MCF 10A (cell line): ENCODE measurements at regions of chr4 and their contacts with region 1.

Region 1: DNA sequence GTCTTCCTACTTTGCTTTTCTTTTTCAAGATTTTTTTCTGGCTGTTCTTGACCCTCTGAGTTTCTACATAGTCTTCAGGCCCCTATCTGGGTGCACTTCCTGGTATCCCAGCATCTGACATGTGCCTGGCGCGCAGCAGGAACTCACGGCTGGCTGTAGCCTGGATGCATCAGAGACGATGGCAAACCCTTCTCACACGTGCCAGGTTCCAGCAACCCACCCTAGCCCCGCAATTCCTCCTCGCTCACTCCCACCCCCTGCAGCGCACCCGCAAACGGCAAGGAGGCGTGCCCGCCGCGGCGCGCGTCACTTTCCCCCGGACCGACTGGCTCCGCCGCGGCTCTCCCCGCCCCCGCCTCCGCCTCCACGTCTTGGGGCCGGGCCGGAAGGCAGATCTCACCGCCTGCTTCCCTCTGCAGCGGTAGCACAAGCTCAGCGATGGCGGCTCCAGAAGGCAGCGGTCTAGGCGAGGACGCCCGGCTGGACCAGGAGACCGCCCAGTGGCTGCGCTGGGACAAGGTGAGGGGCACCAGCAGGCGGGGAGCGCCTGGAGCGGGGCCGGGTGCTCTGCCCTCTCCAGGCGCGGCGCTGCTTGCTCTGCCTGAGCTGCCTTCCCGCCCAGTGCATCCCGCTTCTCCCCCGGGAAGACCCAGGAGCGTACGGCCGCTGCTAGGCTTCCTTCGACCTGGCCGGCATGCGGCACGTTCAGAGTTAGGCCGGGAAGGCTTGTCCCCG is at the start of gene PGM2:
- DNase-seq: peak; percentile 87
- H3K4me3 Mint-ChIP-seq: peak within 1 kb of the TSS; percentile 88
- H3K27ac Mint-ChIP-seq: peak within 1 kb of the TSS; percentile 89
- H3K4me1 Mint-ChIP-seq: peaks cover 38% of the 10 kb centered on the region
- H3K27me3 Mint-ChIP-seq: no peaks in the 10 kb centered on the region
- CTCF ChIP-seq: no peak
- total RNA-seq, gene PGM2: 23.9 and 27.9 TPM in 2 replicates

Region 2: DNA sequence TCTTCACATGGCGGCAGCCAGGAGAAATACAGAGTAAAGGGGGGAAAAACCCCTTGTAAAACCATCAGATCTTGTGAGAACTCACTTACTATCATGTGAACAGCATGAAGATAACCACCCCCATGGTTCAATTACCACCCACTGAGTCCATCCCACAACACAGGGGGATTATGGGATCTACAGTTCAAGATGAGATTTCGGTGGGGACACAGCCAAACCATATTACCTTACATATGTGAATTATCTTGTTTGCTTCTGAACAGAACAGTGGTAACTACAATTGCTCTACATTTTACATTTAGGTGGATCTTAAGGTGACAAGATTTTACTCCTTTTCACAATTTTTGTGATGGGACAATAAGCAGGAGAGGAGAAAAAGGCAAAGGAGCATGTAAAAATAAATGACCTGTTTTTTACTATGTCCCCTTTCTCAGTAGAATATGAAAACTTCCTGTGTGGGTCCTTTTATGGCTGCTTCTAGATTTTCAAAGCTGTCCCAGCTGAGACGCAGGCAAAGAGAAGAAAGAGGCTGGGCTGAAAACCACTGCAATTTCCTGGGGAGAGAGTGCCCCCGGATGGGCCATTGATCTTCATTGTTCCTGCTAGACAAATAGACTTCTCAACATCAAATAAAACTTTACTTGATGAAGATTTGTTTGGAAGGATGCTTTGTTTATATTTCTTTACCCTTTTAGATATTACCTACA is 45.9 kb before region 1 on chr4:
- CTCF ChIA-PET with region 1: no interaction called
- POLR2A ChIA-PET with region 1: no interaction called
- intact Hi-C with region 1: no loop called
- DNase-seq: no peak
- H3K4me3 Mint-ChIP-seq: no peak overlapping the region
- H3K27ac Mint-ChIP-seq: no peak overlapping the region
- H3K4me1 Mint-ChIP-seq: no peaks in the 10 kb centered on the region
- H3K27me3 Mint-ChIP-seq: no peaks in the 10 kb centered on the region
- CTCF ChIP-seq: no peak

Region 3: DNA sequence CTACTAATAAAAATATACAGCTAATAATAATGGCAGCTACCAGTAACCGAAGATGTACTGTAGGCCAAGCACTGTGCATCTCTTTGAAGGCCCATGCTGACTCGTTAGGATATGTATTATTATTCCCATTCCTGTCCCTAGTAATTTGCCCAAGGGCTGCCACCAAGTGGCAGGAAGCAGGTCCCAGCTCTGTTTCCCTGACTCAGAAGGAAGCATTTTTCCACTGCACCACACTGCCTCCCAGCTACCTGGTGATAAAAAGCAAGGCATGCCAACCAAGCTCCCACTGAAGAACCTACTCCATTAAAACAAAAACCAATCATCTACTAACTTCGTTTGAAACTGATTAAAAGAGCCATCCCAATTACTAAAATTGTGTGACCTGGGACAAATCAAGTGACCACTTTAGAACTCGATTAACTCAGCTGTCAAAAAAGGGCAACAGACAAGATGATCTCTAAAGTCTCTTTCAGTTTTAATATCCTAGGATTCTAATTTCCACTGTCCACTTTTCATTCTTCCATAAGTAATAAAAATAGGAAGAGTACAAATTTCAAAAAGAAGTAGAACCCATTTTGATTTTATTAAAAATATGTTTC is 24.3 kb before region 1 on chr4:
- CTCF ChIA-PET with region 1: interaction called, 31 read pairs
- POLR2A ChIA-PET with region 1: interaction called, 13 read pairs
- intact Hi-C with region 1: no loop called
- DNase-seq: peak; percentile 87
- H3K4me3 Mint-ChIP-seq: no peak overlapping the region
- H3K27ac Mint-ChIP-seq: no peak overlapping the region
- H3K4me1 Mint-ChIP-seq: peaks cover 10% of the 10 kb centered on the region
- H3K27me3 Mint-ChIP-seq: no peaks in the 10 kb centered on the region
- CTCF ChIP-seq: peak; percentile 53

Region 4: GRCh38 chr4:37837446-37837845 is 11.0 kb after region 1 on chr4:
- CTCF ChIA-PET with region 1: interaction called, 4 read pairs
- POLR2A ChIA-PET with region 1: interaction called, 15 read pairs
- intact Hi-C with region 1: no loop called
- DNase-seq: peak; percentile 61
- H3K4me3 Mint-ChIP-seq: no peak overlapping the region
- H3K27ac Mint-ChIP-seq: no peak overlapping the region
- H3K4me1 Mint-ChIP-seq: peaks cover 10% of the 10 kb centered on the region
- H3K27me3 Mint-ChIP-seq: no peaks in the 10 kb centered on the region
- CTCF ChIP-seq: no peak

Region 5: GRCh38 chr4:37891260-37892159 is 65.0 kb after region 1 on chr4:
- CTCF ChIA-PET with region 1: interaction called, 4 read pairs
- POLR2A ChIA-PET with region 1: interaction called, 13 read pairs
- intact Hi-C with region 1: no loop called
- DNase-seq: peak; percentile 33
- H3K4me3 Mint-ChIP-seq: peak overlapping the region; percentile 72
- H3K27ac Mint-ChIP-seq: no peak overlapping the region
- H3K4me1 Mint-ChIP-seq: no peaks in the 10 kb centered on the region
- H3K27me3 Mint-ChIP-seq: no peaks in the 10 kb centered on the region
- CTCF ChIP-seq: no peak